ENCODE measurements at regions of chr7 and their contacts with region 1.

Region 1: GRCh38 chr7:101186844-101187428 is 6.8 kb upstream of the NAT16 start:
- DNase-seq: no peak
- H3K4me3 Mint-ChIP-seq: no peak overlapping the region
- H3K27ac Mint-ChIP-seq: no peak overlapping the region
- H3K4me1 Mint-ChIP-seq: peaks cover 5% of the 10 kb centered on the region
- H3K27me3 Mint-ChIP-seq: peaks cover 18% of the 10 kb centered on the region

Region 2: DNA sequence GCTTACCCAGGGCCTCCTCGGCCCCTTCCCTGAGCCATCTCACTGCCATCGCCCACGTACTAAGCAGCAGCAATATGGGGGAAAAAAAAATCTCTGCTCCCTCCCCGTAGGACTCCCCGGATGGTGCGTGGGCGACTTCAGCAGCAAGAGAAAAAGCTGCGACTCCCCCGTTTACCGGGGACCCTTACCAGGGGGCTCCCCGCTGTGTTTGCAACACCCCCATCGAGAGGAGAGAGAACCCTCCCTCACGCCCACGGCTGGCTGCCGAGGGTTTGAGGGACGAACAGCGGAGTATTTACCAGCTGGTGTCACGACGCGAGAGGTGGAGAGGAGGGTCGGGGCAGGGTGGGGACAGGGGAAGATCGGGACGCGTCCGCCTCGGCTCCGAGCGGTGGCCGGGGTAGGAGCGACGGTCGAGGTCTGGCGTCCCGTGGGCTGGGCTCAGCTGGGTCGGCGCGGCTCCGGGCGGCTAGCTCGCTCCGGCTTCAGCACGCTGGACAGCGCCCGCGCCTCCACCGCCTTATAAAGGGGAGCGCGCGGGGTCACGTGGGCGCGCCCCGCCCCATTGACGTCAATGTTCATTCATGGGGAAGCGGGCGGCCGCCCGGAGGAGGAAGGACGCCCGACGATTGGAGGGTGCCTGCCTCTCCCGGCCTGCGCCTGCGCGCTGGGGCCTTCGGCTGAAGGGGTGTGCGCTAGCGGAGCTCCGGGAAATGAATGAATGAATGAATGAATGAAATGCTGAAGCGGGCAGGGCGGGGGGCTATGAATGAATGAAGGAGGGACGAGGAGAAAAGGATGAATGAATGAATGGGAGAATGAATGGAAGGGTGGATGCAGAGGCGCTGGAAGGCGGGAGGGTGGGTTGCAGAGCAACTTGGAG is 21.6 kb before region 1 on chr7 and contains the start of gene VGF:
- CTCF ChIA-PET with region 1: interaction called, 11 read pairs
- POLR2A ChIA-PET with region 1: no interaction called
- DNase-seq: peak; percentile 94
- H3K4me3 Mint-ChIP-seq: peak within 1 kb of the TSS; percentile 60
- H3K27ac Mint-ChIP-seq: peak within 1 kb of the TSS; percentile 52
- H3K4me1 Mint-ChIP-seq: peaks cover 42% of the 10 kb centered on the region
- H3K27me3 Mint-ChIP-seq: peaks cover 63% of the 10 kb centered on the region
- total RNA-seq, gene VGF: 0.15 to 0.22 TPM

Region 3: DNA sequence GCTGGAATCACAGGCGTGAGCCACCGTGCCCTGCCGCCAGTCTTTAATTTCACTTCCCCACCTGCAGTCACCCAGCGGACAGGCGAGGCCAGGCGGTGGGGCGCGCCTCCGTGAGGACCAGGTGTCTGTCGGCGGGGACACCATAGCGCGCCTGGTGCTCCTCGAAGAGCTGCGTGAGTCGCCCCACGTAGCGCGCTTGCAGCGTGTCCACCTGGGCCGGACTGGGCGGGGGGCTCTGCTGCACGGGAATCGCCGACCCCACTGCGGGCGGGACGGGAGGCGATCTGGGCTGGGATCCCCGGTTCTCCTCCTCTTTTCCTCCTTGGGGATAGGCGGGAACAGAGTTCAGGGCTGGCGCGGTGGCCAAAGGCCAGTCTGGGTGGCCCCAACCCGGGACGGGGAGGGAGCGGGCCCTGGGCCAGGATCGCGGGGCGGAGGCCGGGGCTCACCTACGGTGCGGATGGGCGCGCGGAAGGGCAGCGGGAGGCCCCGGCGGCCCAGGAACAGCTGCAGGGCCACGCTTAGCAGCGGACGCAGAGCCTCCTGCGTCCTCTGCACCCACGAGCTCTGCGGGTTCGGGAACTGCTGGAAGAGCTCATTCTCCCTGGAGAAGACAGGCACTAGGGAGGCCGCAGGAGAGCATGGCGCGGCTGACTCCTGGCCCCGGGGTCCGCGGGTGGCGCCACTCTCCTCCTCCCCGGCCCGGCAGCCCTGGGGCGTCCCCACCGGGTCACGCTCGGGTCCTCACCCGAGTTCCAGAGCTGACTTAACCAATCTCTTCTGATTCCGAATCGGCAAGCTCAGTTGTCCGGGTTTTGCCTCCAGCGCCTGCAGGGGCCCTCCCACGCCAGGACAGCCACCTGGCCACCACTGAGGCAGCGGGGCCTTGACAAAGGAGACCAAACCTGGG is 15.0 kb after region 1 on chr7:
- CTCF ChIA-PET with region 1: interaction called, 14 read pairs
- POLR2A ChIA-PET with region 1: no interaction called
- DNase-seq: no peak
- H3K4me3 Mint-ChIP-seq: no peak overlapping the region
- H3K27ac Mint-ChIP-seq: no peak overlapping the region
- H3K4me1 Mint-ChIP-seq: peaks cover 11% of the 10 kb centered on the region
- H3K27me3 Mint-ChIP-seq: peaks cover 34% of the 10 kb centered on the region

Region 4: DNA sequence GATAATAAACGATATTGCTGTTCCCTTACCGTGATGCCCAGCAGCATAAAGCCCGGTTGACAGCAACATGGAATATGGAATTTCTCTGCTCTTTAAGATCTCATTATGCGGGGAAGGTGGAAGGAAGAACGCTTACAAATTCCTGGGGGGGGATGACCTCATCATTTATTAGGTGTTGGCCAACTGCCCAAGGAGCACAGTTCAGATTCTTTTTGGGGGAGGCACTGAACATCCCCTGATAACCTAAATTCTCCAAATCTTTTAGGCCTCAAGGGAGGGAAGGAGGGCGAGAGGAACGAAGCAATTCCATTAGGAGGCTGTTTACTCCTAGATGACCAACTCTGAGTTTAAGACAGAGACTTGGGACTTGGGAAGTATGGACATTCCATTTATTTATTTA is 170.5 kb after region 1 on chr7:
- CTCF ChIA-PET with region 1: no interaction called
- POLR2A ChIA-PET with region 1: no interaction called
- DNase-seq: no peak
- H3K4me3 Mint-ChIP-seq: no peak overlapping the region
- H3K27ac Mint-ChIP-seq: no peak overlapping the region
- H3K4me1 Mint-ChIP-seq: peaks cover 6% of the 10 kb centered on the region
- H3K27me3 Mint-ChIP-seq: peaks cover 15% of the 10 kb centered on the region

Measured in activated CD4-positive, alpha-beta T cell treated with anti-CD3 and anti-CD28 coated beads, Interleukin-2, amount 10 ng/mL, durations not matched to agents 7 days and 5 days (primary cell).